ENCODE measurements at regions of chr3 and their contacts with region 1.

Region 1: GRCh38 chr3:104460477-104461406 is 906.0 kb upstream of the ALCAM start:
- DNase-seq: peak; percentile 10
- H3K4me3 ChIP-seq: no peak overlapping the region
- H3K27ac ChIP-seq: no peak overlapping the region
- H3K4me1 ChIP-seq: peaks cover 4% of the 10 kb centered on the region
- H3K27me3 ChIP-seq: no peaks in the 10 kb centered on the region
- CTCF ChIP-seq: peak; percentile 34 to 55

Region 2: DNA sequence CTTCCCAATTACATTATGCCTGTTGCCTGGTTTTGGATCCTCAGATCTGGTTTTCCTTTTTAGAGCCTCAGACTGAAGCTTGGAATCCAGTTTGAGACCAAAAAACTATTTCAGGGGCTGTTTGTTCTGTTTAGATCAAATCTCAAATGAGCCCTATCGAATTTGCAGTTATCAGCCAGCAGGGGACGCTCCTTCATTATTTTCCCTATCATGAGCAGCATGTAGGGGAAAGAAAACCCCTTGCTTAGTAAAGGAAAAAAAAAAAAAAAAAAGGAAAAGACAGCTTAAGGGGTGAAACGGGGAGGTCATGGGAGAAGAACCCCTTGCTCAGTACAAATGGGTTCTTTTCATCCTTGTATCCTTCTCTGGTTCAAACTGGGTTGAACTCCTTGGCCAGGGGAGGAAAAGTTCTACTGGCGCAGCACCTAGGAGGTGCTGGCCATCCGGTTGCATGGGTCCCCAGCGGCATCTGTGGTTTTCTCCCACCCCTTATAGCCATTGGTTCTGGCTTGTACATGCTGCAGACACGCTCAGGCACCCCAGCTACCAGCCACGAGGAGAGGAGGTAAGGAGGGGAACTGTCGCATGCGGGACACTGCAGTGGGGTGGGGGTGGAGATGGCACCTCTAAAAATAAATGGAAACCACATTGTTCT is 469.2 kb before region 1 on chr3:
- CTCF ChIA-PET with region 1: no interaction called
- dilution Hi-C with region 1: no loop called
- in situ Hi-C with region 1: no loop called
- intact Hi-C with region 1: loop called (anchors 10 kb)
- DNase-seq: no peak
- H3K4me3 ChIP-seq: no peak overlapping the region
- H3K27ac ChIP-seq: no peak overlapping the region
- H3K4me1 ChIP-seq: no peaks in the 10 kb centered on the region
- H3K27me3 ChIP-seq: no peaks in the 10 kb centered on the region
- CTCF ChIP-seq: peak; percentile 62 to 65

Region 3: DNA sequence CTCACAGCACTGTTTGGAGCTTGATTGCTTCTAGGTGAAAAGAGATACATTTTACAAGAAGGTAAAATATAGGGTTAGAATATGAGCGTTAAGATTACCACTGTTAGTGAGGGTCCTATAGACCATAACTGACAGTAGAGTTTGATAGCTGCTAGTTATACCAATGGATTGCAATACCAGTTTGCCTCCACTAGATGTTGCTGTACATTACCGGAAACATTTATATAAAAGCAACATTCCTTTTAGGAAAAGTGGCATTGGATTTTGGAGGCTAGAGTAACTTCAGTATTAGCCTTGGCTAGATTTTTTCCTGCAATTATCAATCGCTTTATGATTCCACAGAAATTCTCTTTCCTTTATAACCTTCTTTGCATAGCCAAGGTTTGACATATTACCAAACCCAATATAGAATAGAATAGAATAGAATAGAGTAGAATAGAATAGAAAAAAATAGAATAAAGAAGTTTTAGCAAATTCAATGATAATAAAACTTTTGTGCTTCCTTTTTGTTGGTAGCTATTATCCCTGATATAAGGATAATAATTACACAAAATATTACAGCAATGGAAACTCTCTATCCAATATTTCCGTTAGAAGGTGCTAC is 187.6 kb before region 1 on chr3:
- CTCF ChIA-PET with region 1: no interaction called
- dilution Hi-C with region 1: no loop called
- in situ Hi-C with region 1: loop called in 1 of 2 experiments (anchors 10 kb)
- intact Hi-C with region 1: loop called (anchors 1 kb)
- DNase-seq: peak; percentile 17
- H3K4me3 ChIP-seq: no peak overlapping the region
- H3K27ac ChIP-seq: no peak overlapping the region
- H3K4me1 ChIP-seq: no peaks in the 10 kb centered on the region
- H3K27me3 ChIP-seq: no peaks in the 10 kb centered on the region
- CTCF ChIP-seq: peak; percentile 80 to 84

Measured in mammary epithelial cell (primary cell).